ENCODE measurements at regions of chr5 and their contacts with region 1.

Region 1: GRCh38 chr5:178250263-178250662 is 17.7 kb upstream of the PHYKPL start:
- DNase-seq: no peak
- H3K4me3 Mint-ChIP-seq: no peak overlapping the region
- H3K27ac Mint-ChIP-seq: no peak overlapping the region
- H3K4me1 Mint-ChIP-seq: no peaks in the 10 kb centered on the region
- H3K27me3 Mint-ChIP-seq: peaks cover 32% of the 10 kb centered on the region
- CTCF ChIP-seq: no peak

Region 2: GRCh38 chr5:178502401-178503100 is 252.3 kb after region 1 on chr5:
- CTCF ChIA-PET with region 1: interaction called, 12 read pairs
- intact Hi-C with region 1: no loop called
- DNase-seq: no peak
- H3K4me3 Mint-ChIP-seq: no peak overlapping the region
- H3K27ac Mint-ChIP-seq: no peak overlapping the region
- H3K4me1 Mint-ChIP-seq: no peaks in the 10 kb centered on the region
- H3K27me3 Mint-ChIP-seq: no peaks in the 10 kb centered on the region
- CTCF ChIP-seq: no peak